ENCODE measurements at regions of chrX and their contacts with region 1.

Region 1: DNA sequence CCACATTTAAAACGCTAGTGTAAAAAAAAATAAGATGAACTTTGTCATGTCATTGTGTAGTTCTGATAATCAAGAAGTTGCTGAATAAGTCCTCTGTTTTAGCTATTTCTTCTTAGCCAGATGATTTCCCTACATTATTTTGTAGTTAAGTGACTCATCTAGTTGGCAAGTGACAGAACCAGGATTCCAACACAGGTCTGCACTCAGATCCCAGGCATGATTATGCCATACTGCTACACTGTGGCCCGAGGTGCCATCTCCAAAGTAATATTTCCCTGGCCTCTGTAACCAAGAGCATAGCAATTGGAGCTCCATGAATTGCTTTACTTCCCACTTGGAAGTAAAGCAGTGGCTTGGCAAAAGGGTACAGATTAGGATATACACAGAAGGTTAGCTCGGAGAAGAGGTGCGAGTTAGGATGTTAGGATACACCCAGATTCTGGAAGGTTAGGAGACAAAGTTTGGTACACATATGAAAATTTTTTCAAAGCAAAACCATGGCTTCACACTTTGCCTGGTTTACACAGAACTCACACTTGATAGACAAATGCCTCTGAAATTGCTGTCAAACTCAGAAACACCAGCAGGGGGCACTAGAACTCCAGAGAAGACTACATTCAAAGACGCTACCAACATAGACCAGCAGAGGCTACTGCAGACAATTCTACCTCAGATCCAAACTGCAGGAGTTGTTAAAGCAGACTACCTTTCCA is 41.4 kb downstream of the SRPX2 start:
- DNase-seq: peak in 7 of 10 donors; percentile 42 to 88 (median 52)
- H3K4me3 ChIP-seq: no peak overlapping the region
- H3K27ac ChIP-seq: no peak overlapping the region
- H3K27me3 ChIP-seq: peaks cover 0 to 86% (median 29%) of the 10 kb centered on the region in 45 donors
- CTCF ChIP-seq: peak in 55 of 56 donors; percentile 70 to 93 (median 86)

Region 2: GRCh38 chrX:100274916-100275315 is 410.5 kb before region 1 on chrX:
- intact Hi-C with region 1: no loop called
- DNase-seq: no peak
- H3K4me3 ChIP-seq: no peak overlapping the region
- H3K27ac ChIP-seq: no peak overlapping the region
- H3K27me3 ChIP-seq: peaks cover 0 to 32% (median 0%) of the 10 kb centered on the region in 45 donors
- CTCF ChIP-seq: no peak

Region 3: GRCh38 chrX:100768679-100769338 is 83.4 kb after region 1 on chrX:
- intact Hi-C with region 1: loop called (anchors 2 to 10 kb)
- DNase-seq: peak in 9 of 10 donors; percentile 5 to 77 (median 44)
- H3K4me3 ChIP-seq: no peak overlapping the region
- H3K27ac ChIP-seq: no peak overlapping the region
- H3K27me3 ChIP-seq: peaks cover 0 to 13% (median 0%) of the 10 kb centered on the region in 45 donors
- CTCF ChIP-seq: peak; percentile 46 to 95 (median 86)

Region 4: DNA sequence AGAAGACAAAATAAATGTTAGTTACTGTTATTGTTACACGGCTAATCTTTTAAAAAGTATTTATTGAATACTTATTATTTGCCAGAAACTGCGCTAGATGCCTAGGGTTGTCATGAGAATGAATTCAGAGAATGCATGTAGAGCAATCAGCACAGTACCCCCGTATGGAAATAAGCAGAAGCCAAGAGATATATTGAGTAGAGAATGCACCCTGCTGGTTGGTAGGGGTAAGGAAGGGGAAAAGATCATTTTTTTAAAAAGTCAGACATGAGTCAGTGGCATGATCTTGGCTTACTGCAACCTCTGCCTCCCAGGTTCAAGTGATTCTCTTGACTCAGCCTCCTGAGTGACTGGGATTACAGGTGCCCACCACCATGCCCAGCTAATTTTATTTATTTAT is 521.0 kb after region 1 on chrX:
- intact Hi-C with region 1: loop called (anchors 10 kb)
- DNase-seq: no peak
- H3K4me3 ChIP-seq: no peak overlapping the region
- H3K27ac ChIP-seq: no peak overlapping the region
- H3K27me3 ChIP-seq: peaks cover 0 to 86% (median 13%) of the 10 kb centered on the region in 45 donors
- CTCF ChIP-seq: peak in 50 of 56 donors; percentile 14 to 52 (median 31)

Region 5: DNA sequence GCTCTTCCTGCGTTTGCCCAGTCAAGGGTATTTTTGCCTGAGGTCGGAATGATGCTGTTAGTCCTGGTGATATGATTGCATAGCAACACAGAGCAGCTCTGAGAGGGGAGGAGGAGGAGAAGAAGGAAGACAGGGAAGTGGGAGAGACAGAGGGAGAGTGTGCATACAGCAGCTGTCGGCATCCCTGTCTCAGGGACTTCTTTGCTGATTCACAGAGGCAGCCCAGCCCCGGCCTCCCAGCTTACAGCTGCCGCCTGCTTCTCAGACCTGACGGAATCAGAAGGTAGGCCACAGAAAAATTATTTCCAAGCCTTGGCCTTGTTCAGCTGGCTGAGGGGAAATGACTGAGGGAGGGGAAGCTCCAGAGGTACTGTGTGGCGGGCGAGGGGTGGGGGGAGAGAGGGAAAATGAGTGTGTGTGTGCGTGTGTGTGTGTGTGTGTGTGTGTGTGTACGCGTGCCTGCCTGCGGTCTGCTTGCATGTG is 534.5 kb after region 1 on chrX:
- intact Hi-C with region 1: no loop called
- DNase-seq: peak in 4 of 10 donors; percentile 38 to 64 (median 45)
- H3K4me3 ChIP-seq: peak overlapping the region in 43 of 59 donors; percentile 4 to 57 (median 39)
- H3K27ac ChIP-seq: peak overlapping the region in 28 of 59 donors; percentile 2 to 69 (median 47)
- H3K27me3 ChIP-seq: peaks cover 0 to 71% (median 16%) of the 10 kb centered on the region in 45 donors
- CTCF ChIP-seq: no peak

Region 6: GRCh38 chrX:101287402-101287801 is 602.0 kb after region 1 on chrX:
- intact Hi-C with region 1: loop called in 1 of 2 experiments (anchors 5 kb)
- DNase-seq: no peak
- H3K4me3 ChIP-seq: no peak overlapping the region
- H3K27ac ChIP-seq: no peak overlapping the region
- H3K27me3 ChIP-seq: peaks cover 0 to 63% (median 16%) of the 10 kb centered on the region in 45 donors
- CTCF ChIP-seq: peak; percentile 26 to 73 (median 58)